ENCODE measurements at regions of chr18 and their contacts with region 1.

Region 1: DNA sequence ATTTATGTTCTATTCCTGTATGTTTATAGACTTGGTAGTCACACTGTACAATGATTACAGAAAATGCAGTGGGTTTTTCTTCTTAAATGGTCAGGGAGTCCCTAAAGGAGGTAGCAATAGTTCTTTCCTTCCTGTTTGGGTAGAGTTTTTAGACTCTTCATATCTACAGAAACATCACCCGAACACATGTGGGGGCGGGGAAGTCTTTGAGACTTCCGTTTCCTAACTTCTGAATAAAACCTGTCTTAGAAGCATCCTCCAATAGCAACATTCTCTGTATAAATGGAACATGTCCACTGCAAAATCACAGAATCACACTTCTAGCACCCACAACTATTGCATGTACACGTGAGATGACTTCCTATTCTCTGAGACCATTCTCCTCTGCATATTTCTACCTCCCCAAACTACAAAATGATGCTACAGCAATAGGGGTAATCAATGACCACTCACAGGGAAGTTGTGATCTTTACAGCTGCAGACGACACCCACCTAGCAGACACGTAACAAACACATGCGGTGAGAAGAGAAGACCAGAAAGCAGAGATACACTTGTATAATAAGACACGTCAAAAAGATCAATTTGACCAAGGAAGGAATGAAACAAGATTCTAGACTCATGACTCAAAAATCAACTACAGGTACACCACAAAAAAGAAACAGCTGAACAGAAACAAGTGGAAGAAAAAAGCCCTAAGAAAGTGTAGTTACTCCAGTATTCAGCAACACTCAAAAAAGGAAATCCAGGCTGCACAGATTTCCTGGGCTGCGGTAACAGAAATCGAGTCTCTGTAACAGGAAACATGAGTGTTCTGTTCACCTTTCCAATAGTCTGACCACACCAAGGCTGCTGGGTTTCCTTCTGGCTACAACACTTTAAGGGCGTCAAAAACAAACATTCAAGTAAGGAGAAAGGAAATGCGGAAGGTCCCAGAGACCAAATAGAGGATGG is 120.4 kb downstream of the ZNF516 start:
- DNase-seq: peak; percentile 33
- H3K4me3 Mint-ChIP-seq: no peak overlapping the region
- H3K27ac Mint-ChIP-seq: peak overlapping the region; percentile 53
- H3K4me1 Mint-ChIP-seq: peaks cover 39% of the 10 kb centered on the region
- H3K27me3 Mint-ChIP-seq: peaks cover 7% of the 10 kb centered on the region

Region 2: DNA sequence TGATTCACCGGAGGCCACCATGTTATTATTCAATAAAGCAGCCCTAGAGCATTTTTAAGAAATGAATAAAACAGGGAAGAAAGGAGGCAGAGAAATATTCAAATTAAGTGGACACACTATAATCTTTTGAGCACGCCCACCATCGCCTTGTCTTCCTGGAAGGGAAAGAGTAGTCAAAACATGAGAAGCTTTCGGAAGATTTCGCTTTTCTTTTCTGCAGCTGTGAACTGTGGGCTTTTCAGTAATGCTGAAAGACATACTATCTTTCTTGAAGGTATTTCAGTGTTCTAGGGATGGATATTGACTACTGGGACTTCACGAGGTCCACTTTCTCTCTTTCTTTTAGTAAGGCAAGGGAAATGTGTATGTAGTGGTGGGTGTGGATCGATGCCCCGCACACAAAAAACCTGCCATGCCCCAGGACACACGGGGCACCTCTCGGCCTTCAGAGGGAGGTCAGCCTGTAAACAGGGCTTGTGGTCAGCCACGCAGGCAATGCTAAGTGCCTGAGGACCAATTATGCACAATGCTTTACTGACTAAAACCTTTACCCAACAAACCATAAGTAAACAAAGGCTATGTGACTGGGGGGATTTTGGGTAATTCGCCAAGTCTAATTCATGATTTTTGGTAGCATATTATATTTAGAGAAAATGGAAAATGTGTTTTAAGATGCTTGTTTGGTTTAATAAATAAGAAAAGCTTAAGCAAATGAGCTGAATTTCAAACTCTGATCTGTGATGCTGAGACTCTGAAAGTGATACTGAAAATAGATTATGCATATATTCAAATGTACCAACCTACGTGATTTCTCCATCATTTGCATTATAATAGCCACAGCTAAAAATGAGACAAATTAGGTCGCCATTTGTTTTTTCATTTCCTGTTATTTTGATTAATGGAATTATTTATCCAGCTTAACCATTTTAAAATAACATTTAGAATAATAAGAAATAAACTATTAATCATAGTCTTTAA is 10.0 kb before region 1 on chr18:
- intact Hi-C with region 1: loop called (anchors 1 kb)
- DNase-seq: no peak
- H3K4me3 Mint-ChIP-seq: no peak overlapping the region
- H3K27ac Mint-ChIP-seq: no peak overlapping the region
- H3K4me1 Mint-ChIP-seq: peaks cover 10% of the 10 kb centered on the region
- H3K27me3 Mint-ChIP-seq: peaks cover 2% of the 10 kb centered on the region

Region 3: DNA sequence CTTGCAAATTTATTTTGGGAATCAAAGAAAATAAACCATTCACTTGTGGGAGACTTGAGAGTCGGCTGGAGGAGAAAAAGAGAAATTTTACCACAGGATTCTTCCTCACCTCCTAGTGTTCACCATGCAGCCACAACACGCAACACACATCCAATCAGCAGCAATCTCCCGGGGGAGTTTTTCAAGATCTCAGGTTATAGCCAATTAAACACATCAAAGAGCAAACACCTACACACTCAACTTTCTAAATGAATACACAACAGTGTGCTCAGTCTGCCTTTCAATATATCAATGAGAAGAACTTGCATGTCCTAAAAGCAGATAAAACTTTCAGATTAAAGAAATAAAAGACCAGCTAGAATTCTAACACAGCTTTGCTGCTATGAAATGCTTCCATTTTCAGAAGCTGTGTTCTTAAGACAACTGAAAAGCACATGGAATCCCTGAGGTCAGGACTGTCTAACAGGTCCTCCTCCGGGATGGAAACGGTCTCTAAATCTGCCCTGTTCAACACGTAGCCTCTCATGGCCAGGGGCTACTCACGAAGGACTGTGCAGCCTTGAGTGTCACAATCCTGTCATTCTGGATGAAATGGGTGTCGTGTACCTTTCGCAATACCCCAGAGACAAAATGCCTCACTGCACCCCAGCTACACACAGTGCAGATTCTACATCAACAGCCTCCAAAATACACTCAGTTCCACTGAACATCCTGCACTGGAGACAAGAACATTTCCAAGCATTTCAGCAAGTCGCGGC is 36.2 kb after region 1 on chr18:
- intact Hi-C with region 1: loop called (anchors 1 kb)
- DNase-seq: no peak
- H3K4me3 Mint-ChIP-seq: no peak overlapping the region
- H3K27ac Mint-ChIP-seq: no peak overlapping the region
- H3K4me1 Mint-ChIP-seq: peaks cover 11% of the 10 kb centered on the region
- H3K27me3 Mint-ChIP-seq: peaks cover 5% of the 10 kb centered on the region

Region 4: GRCh38 chr18:76658627-76659026 is 284.0 kb after region 1 on chr18:
- intact Hi-C with region 1: loop called (anchors 2 kb)
- DNase-seq: no peak
- H3K4me3 Mint-ChIP-seq: no peak overlapping the region
- H3K27ac Mint-ChIP-seq: no peak overlapping the region
- H3K4me1 Mint-ChIP-seq: peaks cover 21% of the 10 kb centered on the region
- H3K27me3 Mint-ChIP-seq: peaks cover 53% of the 10 kb centered on the region

Measured in activated T-helper 2 cell treated with anti-CD3 and anti-CD28 coated beads, Interferon-gamma antibody, Interleukin-2, Interleukin-4, amounts not matched to agents 10 μg/mL and 5 μg/mL and 100 μg/mL, durations not matched to agents 14 hours and 24 hours and 36 hours (primary cell).